ENCODE measurements at regions of chr15 and their contacts with region 1.

Region 1: GRCh38 chr15:92917606-92918407 is 17.7 kb downstream of the CHD2 start:
- DNase-seq: peak; percentile 99
- H3K4me3 ChIP-seq: peak overlapping the region; percentile 10 to 32 (median 21)
- H3K27ac ChIP-seq: peak overlapping the region; percentile 89 to 98 (median 94)
- H3K4me1 ChIP-seq: peaks cover 87 to 100% (median 100%) of the 10 kb centered on the region in 4 donors
- H3K27me3 ChIP-seq: no peaks in the 10 kb centered on the region
- CTCF ChIP-seq: peak; percentile 88 to 97 (median 97)
- EP300 ChIP-seq: no peak
- POLR2A ChIP-seq: no peak

Region 2: DNA sequence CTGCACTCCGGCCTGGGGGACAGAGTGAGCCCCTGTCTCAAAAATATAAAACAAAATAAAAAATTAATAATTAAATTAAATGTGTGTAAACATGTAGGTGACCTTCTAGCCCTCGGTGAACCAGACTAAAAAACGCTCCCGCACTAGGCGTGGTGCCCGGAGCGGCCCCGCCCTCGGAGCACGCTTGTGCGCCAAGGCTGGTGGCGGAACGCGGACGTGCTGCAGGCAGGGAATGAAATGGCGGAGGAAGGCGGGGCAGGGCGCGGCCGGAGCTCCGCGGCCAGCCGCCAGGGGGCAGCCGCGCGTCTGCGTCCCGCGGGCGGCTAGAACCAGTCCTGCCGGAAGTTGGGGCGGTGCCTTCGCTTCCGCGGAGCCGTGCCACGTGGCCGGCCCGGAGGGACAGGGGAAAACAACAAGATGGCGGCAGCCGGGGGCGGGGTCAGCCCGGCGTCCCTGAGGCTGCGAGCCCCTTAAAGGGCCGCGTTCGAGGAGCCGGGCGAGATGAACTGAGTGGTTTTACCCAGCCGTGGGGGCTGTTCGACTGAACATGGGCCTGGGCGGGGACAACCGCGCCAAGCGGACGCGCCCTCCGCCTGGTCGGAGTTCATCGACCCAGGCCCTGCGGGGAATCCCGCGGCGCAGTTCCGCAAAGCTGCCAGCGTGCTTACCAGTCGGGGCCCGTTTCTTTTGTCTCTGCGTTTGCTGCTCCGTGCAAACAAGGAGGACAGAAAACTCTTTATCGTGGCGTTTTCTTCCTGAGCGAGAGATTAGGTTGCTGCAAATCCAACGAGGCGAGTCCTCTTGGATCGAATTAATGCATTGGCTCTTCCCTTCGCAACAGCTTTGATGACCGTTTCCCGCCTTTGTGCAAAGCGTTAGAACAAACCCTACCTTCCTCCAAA is 108.6 kb before region 1 on chr15:
- intact Hi-C with region 1: loop called (anchors 2 kb)
- DNase-seq: peak; percentile 100
- H3K4me3 ChIP-seq: peak overlapping the region; percentile 64 to 70 (median 68)
- H3K27ac ChIP-seq: peak overlapping the region; percentile 91 to 98 (median 96)
- H3K4me1 ChIP-seq: peaks cover 29 to 59% (median 54%) of the 10 kb centered on the region in 4 donors
- H3K27me3 ChIP-seq: no peaks in the 10 kb centered on the region
- CTCF ChIP-seq: peak in 2 of 3 experiments; percentile 97 to 99
- EP300 ChIP-seq: no peak
- POLR2A ChIP-seq: peak; percentile 41

Measured in esophagus muscularis mucosa (tissue), 4 donors.